ENCODE measurements at regions of chr10 and their contacts with region 1.

Region 1: GRCh38 chr10:17607603-17608332 is 9.4 kb downstream of the HACD1 start:
- DNase-seq: peak; percentile 74
- H3K4me3 ChIP-seq: no peak overlapping the region
- H3K27ac ChIP-seq: no peak overlapping the region
- H3K4me1 ChIP-seq: peaks cover 9% of the 10 kb centered on the region
- H3K27me3 ChIP-seq: no peaks in the 10 kb centered on the region
- CTCF ChIP-seq: peak; percentile 84

Region 2: DNA sequence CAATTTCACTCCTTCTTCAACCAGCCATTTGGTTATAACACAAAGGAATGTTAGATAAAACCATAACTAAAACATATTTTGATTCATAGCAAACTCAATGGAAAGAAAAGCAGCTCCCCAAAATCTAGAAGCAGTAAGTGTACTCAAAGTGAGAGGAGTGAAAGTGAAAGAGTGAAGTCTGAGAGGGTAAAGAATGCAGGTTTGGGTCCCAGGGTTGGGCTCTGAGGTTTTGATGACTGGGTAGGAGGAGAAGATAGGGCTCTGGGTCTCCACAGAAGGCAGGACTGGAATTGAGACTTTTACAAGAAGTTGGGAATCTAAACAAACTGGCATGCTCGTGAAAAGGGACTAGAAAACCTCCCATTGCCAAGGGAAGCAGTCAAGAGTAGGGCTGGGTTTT is 705.2 kb before region 1 on chr10:
- CTCF ChIA-PET with region 1: no interaction called
- POLR2A ChIA-PET with region 1: no interaction called
- intact Hi-C with region 1: no loop called
- DNase-seq: no peak
- H3K4me3 ChIP-seq: no peak overlapping the region
- H3K27ac ChIP-seq: no peak overlapping the region
- H3K4me1 ChIP-seq: no peaks in the 10 kb centered on the region
- H3K27me3 ChIP-seq: no peaks in the 10 kb centered on the region
- CTCF ChIP-seq: no peak

Region 3: DNA sequence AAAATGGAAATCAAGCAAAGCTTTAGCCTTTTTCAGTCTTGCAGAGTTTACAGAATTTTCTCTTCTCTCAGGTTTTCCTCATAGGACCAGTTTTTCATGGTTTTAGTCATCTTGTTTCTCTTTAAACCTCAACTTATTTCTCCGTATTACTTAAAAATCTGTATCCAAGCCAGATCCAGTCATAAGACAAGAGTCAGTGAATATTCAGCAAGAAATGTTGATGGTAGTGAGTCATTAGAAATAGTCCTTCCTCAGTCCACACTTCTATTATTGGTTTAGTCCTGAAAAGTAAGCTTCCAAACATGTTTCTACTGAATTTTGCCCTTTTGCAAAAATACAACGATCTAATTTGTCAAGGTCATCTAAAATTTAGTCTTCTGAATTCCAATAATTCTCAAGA is 272.7 kb before region 1 on chr10:
- CTCF ChIA-PET with region 1: no interaction called
- POLR2A ChIA-PET with region 1: no interaction called
- intact Hi-C with region 1: no loop called
- DNase-seq: no peak
- H3K4me3 ChIP-seq: no peak overlapping the region
- H3K27ac ChIP-seq: no peak overlapping the region
- H3K4me1 ChIP-seq: no peaks in the 10 kb centered on the region
- H3K27me3 ChIP-seq: no peaks in the 10 kb centered on the region
- CTCF ChIP-seq: no peak

Region 4: GRCh38 chr10:17742918-17743317 is 135.2 kb after region 1 on chr10:
- CTCF ChIA-PET with region 1: no interaction called
- POLR2A ChIA-PET with region 1: no interaction called
- intact Hi-C with region 1: loop called (anchors 1 kb)
- DNase-seq: peak; percentile 79
- H3K4me3 ChIP-seq: no peak overlapping the region
- H3K27ac ChIP-seq: no peak overlapping the region
- H3K4me1 ChIP-seq: peaks cover 4% of the 10 kb centered on the region
- H3K27me3 ChIP-seq: no peaks in the 10 kb centered on the region
- CTCF ChIP-seq: peak; percentile 81

Region 5: DNA sequence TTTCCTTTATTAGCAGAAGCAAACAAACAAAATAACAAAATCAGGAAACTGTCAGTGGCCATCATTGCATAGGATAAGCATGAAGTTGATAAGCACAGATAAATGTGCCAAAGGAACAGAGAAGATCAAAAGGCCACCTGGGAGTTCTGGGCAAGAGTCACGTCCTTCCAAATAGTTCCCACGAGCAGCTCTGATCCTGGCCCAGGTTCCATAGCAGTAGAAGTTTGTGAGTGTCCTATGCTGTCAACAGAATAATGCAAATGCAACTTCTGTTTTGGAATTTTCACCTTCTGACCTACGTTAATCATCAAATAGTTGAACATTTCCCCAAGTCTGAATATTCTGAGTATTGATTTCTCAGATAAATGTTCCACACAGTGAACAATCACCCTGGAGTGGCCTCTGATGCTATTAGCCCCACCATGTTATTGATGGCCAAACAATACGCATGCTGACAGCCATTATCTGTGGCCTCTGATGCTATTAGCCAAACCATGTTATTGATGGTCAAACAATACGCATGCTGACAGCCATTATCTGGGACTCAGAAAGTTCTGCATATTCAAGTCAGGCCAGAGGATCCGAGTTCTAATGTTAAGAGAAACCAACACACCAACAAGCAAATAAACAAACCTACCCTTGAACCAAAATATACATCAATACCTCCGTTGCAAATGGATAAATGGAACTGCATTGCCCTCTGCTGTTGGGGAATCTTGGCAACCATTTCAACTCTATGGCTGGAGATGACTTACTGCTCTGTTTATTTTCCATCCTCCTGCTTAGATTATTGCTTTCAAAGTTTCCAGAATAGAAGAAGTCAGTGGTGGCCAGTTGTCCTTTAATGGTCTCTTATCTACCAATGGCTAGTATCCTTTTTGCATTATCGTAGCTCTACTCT is 264.7 kb after region 1 on chr10:
- CTCF ChIA-PET with region 1: interaction called, 5 read pairs
- POLR2A ChIA-PET with region 1: no interaction called
- intact Hi-C with region 1: loop called (anchors 5 kb)
- DNase-seq: peak; percentile 59
- H3K4me3 ChIP-seq: no peak overlapping the region
- H3K27ac ChIP-seq: no peak overlapping the region
- H3K4me1 ChIP-seq: no peaks in the 10 kb centered on the region
- H3K27me3 ChIP-seq: no peaks in the 10 kb centered on the region
- CTCF ChIP-seq: peak; percentile 72

Region 6: GRCh38 chr10:18140149-18140956 is 532.6 kb after region 1 on chr10 and contains the start of gene CACNB2:
- CTCF ChIA-PET with region 1: no interaction called
- POLR2A ChIA-PET with region 1: no interaction called
- intact Hi-C with region 1: loop called (anchors 10 kb)
- DNase-seq: peak; percentile 85
- H3K4me3 ChIP-seq: peak within 1 kb of the TSS; percentile 83
- H3K27ac ChIP-seq: peak within 1 kb of the TSS; percentile 88
- H3K4me1 ChIP-seq: peaks cover 36% of the 10 kb centered on the region
- H3K27me3 ChIP-seq: no peaks in the 10 kb centered on the region
- CTCF ChIP-seq: 0 out of 2 replicates have a peak, but pooled peaks have one; percentile 11
- total RNA-seq, gene CACNB2: 30.0 and 34.1 TPM in 2 replicates

Region 7: DNA sequence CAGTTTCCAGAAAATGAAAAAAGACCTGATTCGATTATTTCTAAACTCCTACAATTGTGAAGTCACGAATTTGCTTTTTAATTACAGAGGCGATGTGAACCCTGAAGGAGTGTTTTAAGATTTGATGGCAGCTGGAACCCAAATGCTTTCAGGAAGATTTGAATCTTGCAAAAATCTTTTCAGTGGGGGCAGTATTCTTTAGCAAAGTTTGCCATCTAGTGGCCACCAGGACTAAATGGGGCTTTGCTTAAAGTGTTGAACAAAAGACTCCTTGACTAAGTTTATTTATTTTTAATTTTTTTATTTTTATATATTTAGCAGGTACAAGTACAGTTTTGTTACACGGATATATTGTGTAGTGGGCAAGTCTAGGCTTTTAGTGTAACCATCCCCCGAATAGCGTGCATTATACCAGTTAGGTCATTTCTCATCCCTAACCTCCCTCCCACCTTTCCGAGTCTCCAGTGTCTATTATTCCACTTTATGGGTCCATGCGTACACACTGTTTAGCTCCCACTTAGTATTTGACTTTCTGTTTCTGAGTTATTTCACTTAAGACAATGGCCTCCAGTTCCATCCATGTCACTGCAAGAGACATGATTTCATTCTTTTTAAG is 631.2 kb after region 1 on chr10:
- CTCF ChIA-PET with region 1: no interaction called
- POLR2A ChIA-PET with region 1: no interaction called
- intact Hi-C with region 1: loop called (anchors 5 kb)
- DNase-seq: peak; percentile 73
- H3K4me3 ChIP-seq: no peak overlapping the region
- H3K27ac ChIP-seq: peak overlapping the region; percentile 10
- H3K4me1 ChIP-seq: peaks cover 15% of the 10 kb centered on the region
- H3K27me3 ChIP-seq: no peaks in the 10 kb centered on the region
- CTCF ChIP-seq: peak; percentile 75

Region 8: GRCh38 chr10:18369859-18370473 is 762.2 kb after region 1 on chr10:
- CTCF ChIA-PET with region 1: interaction called, 11 read pairs
- POLR2A ChIA-PET with region 1: no interaction called
- intact Hi-C with region 1: no loop called
- DNase-seq: no peak
- H3K4me3 ChIP-seq: no peak overlapping the region
- H3K27ac ChIP-seq: no peak overlapping the region
- H3K4me1 ChIP-seq: peaks cover 16% of the 10 kb centered on the region
- H3K27me3 ChIP-seq: no peaks in the 10 kb centered on the region
- CTCF ChIP-seq: no peak

Measured in A673 (cell line).